Activated CD4-positive, alpha-beta memory T cell treated with anti-CD3 and anti-CD28 coated beads for 36 hours (primary cell): ENCODE measurements at regions of chr12 and their contacts with region 1.

Region 1: GRCh38 chr12:53451661-53452158 is at the start of gene PCBP2:
- DNase-seq: peak; percentile 99
- H3K4me3 Mint-ChIP-seq: peak within 1 kb of the TSS; percentile 94
- H3K27ac Mint-ChIP-seq: peak within 1 kb of the TSS; percentile 98
- H3K4me1 Mint-ChIP-seq: peaks cover 23% of the 10 kb centered on the region
- H3K27me3 Mint-ChIP-seq: no peaks in the 10 kb centered on the region
- total RNA-seq, gene PCBP2: 897 to 926 TPM

Region 2: DNA sequence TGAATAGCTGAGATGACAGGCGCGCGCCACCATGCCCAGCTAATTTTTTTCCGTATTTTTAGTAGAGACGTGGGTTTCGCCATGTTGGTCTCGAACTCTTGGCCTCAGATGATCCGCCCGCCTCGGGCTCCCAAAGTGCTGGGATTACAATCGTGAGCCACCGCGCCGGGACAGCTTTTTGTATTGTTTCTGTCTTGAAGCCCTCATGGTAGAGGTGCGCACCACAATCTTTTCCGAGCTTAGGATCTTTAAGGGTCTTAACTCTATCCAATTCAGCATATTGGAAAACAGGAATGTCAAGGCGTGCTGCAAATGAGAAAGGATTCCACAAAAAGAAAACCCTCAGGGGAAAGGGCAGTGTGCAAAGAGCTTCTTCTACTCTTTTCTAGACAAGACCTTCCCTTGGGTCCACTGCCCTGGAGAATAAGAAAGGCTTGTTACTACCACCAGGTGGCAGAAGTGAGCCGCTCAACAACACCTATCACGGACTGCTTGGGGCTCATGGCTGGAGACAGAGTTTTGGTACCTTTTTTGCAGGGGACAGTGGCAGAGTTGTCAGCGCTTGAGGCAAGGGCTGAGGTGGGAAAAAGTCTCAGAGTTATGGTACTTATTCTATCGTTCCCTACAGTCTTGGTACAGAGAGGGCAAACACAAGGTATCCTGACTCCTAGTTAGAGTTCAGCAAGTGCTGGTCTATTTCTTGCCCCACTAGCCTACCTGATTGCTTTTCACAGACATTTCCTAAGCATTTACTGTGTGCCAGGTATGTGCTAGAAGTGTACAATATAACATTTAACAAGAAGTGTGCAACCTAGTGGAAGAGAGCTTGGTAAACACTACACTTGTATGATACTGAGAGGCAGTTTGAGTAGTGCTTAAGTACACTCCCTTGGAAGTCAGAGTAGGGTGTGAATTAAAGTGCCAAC is 99.1 kb before region 1 on chr12:
- CTCF ChIA-PET with region 1: interaction called, 13 read pairs
- POLR2A ChIA-PET with region 1: no interaction called
- intact Hi-C with region 1: no loop called
- DNase-seq: peak; percentile 90
- H3K4me3 Mint-ChIP-seq: no peak overlapping the region
- H3K27ac Mint-ChIP-seq: peak overlapping the region; percentile 12
- H3K4me1 Mint-ChIP-seq: peaks cover 9% of the 10 kb centered on the region
- H3K27me3 Mint-ChIP-seq: no peaks in the 10 kb centered on the region

Region 3: DNA sequence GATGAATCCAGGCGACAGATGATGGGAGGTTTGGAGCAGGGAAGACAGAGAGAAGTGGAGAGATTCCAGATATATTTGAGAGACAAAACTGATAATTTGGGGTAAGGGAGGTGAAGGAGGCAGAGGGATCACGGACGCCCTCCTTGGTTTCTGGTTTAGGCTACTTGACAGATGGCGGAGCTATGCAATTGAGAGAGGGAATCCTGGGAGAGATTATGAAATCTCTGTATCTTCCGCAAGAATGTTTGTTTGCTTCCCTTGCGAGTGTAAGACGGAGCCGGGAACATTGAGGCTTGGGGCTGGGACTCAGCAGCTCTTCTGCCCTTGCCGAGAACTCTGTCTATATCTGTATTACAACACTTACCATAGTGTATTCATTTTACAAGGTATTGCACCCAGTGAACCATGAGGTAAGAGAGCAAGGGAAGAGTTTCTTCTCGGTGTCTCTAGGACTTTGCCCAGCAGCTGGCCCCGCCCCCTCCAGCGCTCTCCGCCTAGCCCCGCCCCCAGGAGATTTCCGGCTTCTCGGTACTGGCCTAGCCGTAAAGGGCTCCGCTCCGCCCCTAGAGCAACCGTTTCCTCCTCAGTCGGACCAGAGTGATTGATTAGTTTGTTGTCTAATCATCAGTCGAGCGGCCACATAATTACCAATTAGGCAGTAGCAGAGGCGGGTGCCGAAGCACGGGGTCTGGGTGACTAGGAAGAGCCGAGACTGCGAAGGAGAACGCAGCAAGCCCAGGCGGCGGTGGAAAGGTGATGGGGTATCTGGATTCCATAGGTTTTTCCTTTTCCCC is 10.5 kb before region 1 on chr12 and contains the start of gene PRR13:
- CTCF ChIA-PET with region 1: no interaction called
- POLR2A ChIA-PET with region 1: interaction called, 3 read pairs
- intact Hi-C with region 1: loop called (anchors 1 kb)
- DNase-seq: peak; percentile 100
- H3K4me3 Mint-ChIP-seq: peak within 1 kb of the TSS; percentile 97
- H3K27ac Mint-ChIP-seq: peak within 1 kb of the TSS; percentile 93
- H3K4me1 Mint-ChIP-seq: peaks cover 37% of the 10 kb centered on the region
- H3K27me3 Mint-ChIP-seq: no peaks in the 10 kb centered on the region
- total RNA-seq, gene PRR13: 218 to 221 TPM

Region 4: DNA sequence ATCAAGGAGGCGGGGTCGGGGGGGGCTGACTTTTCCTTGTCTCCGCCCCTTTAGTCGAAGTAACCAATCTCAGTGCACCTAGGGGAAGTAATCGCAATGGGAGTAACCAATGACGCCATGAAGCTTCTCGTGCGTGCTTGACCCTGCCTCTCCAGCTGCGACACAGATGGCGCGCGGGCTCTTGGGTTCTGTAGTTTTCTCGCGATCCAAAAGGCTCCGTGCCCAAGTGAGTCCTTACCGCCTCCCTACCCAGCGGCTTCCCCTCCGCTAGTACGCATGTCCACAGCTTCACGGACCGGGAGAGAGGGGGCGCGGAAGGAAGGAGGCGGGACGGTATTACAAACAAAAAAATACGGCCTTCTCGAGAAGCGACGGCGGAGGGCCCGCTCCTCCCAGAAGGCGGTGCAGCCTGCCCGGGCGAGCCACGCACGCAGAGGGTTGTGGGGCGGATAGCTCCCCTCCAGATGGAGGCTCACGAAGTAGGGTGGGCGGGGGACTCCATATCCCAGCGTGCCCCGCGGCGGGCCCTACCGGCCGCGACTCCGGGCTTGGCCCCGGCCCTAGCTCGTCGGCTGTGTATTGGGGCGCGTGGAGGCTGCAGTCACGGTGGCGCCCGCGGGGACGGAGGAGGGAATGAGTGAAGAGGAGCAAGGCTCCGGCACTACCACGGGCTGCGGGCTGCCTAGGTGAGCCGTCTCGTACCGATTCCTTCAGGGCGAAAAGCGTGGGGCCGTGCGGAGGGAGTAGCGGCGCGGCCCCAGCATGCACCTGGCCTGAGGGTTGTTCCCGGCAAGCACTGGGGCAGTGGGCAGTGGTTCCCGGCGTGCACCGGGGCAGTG is 49.3 kb after region 1 on chr12 and contains the start of gene TARBP2:
- CTCF ChIA-PET with region 1: interaction called, 3 read pairs
- POLR2A ChIA-PET with region 1: interaction called, 3 read pairs
- intact Hi-C with region 1: loop called (anchors 1 kb)
- DNase-seq: peak; percentile 96
- H3K4me3 Mint-ChIP-seq: peak within 1 kb of the TSS; percentile 84
- H3K27ac Mint-ChIP-seq: peak within 1 kb of the TSS; percentile 93
- H3K4me1 Mint-ChIP-seq: peaks cover 39% of the 10 kb centered on the region
- H3K27me3 Mint-ChIP-seq: no peaks in the 10 kb centered on the region
- total RNA-seq, gene TARBP2: 27.5 to 29.7 TPM

Region 5: GRCh38 chr12:53585448-53586125 is 133.9 kb after region 1 on chr12:
- CTCF ChIA-PET with region 1: no interaction called
- POLR2A ChIA-PET with region 1: no interaction called
- intact Hi-C with region 1: no loop called
- DNase-seq: no peak
- H3K4me3 Mint-ChIP-seq: no peak overlapping the region
- H3K27ac Mint-ChIP-seq: no peak overlapping the region
- H3K4me1 Mint-ChIP-seq: peaks cover 29% of the 10 kb centered on the region
- H3K27me3 Mint-ChIP-seq: no peaks in the 10 kb centered on the region

Region 6: DNA sequence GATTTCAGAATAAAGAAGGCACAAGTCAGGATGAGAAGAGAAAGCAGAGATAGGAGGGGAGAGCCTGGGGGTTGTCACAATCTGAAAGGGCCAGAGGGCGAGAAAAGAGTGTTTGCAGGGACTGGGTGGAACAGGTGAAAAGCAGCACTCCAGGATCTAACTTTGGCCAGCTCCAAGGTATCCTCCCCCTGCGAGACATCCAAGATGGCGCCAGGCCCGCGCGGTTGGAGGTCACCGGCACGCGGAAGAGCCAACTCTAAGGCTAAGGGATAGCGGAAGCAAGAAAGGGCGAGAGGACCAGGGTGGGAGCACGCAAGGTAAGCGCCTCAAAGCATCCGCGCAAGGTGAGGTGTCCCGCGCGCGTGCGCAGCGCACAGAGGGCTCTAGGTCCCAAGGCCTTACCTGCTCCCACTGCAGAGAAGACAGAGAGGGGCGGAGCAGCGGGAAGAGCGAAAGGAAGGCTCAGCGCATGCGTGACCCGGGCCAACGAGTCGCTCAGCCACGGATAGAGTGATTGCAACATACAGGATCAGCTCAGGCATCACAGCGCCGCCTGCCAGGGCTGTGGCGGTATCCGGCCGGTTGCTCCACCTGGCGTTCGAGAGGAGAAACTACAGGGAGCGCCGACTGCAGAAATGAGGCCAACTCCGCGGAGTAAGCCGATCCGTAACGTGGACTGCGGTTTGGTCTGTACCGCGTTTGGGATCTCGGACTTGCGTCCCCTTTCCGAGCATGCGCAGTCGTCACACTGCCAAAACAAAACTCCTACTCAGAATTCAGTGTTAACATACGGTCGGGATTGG is 224.1 kb after region 1 on chr12 and contains the start of gene ATP5MC2:
- CTCF ChIA-PET with region 1: no interaction called
- POLR2A ChIA-PET with region 1: no interaction called
- intact Hi-C with region 1: loop called (anchors 5 kb)
- DNase-seq: peak; percentile 98
- H3K4me3 Mint-ChIP-seq: peak within 1 kb of the TSS; percentile 81
- H3K27ac Mint-ChIP-seq: peak within 1 kb of the TSS; percentile 89
- H3K4me1 Mint-ChIP-seq: peaks cover 26% of the 10 kb centered on the region
- H3K27me3 Mint-ChIP-seq: peaks cover 19% of the 10 kb centered on the region
- total RNA-seq, gene ATP5MC2: 378 TPM

Region 7: DNA sequence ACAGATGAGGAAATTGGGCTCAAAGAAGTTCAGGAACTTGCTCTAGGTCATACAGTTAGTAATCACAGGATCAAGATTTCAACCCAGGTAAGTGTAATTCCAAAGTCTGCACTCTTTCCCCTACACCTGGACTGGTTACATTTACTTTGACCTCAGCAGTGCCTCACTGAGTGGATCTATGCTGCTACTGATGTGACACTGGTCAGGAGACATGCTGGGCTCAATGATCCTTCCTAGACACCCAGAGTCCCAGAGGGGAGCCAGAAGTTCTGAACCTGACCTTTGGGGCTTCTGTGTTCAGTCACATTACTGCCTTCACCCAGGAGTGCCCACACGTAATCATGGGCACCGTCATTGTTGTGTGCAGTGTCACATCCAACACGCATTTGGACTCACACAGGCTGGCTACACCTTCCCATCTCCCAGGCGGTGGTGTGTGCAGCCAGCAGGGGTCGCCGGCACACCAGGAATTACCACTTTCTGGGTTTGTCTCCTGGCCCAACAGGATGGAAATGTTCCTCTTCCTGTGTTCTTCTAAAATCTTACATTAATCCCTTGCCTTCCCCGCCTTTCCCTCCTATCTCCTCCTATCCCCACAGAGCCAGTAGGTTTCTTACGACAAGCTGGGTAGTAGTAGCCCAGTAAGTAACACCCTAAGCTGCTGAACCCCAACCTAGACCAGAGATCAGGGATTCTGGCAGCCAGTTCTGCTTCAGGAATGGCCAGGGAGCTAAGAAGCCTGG is 250.0 kb after region 1 on chr12:
- CTCF ChIA-PET with region 1: no interaction called
- POLR2A ChIA-PET with region 1: no interaction called
- intact Hi-C with region 1: no loop called
- DNase-seq: peak; percentile 84
- H3K4me3 Mint-ChIP-seq: no peak overlapping the region
- H3K27ac Mint-ChIP-seq: no peak overlapping the region
- H3K4me1 Mint-ChIP-seq: peaks cover 5% of the 10 kb centered on the region
- H3K27me3 Mint-ChIP-seq: peaks cover 62% of the 10 kb centered on the region